ENCODE measurements at regions of chr1 and their contacts with region 1.

Region 1: GRCh38 chr1:92994105-92994712 is 32.9 kb upstream of the DIPK1A start:
- DNase-seq: peak in 1 of 3 donors; percentile 93
- ATAC-seq: peak; percentile 77
- H3K4me3 ChIP-seq: no peak overlapping the region
- H3K4me1 ChIP-seq: peaks cover 21% of the 10 kb centered on the region
- CTCF ChIP-seq: peak; percentile 65

Region 2: GRCh38 chr1:92858564-92859399 is 135.4 kb before region 1 on chr1:
- intact Hi-C with region 1: loop called (anchors 2 kb)
- DNase-seq: peak in 1 of 3 donors; percentile 87
- ATAC-seq: peak; percentile 89
- H3K4me3 ChIP-seq: no peak overlapping the region
- H3K4me1 ChIP-seq: peaks cover 3% of the 10 kb centered on the region
- CTCF ChIP-seq: peak; percentile 88

Region 3: DNA sequence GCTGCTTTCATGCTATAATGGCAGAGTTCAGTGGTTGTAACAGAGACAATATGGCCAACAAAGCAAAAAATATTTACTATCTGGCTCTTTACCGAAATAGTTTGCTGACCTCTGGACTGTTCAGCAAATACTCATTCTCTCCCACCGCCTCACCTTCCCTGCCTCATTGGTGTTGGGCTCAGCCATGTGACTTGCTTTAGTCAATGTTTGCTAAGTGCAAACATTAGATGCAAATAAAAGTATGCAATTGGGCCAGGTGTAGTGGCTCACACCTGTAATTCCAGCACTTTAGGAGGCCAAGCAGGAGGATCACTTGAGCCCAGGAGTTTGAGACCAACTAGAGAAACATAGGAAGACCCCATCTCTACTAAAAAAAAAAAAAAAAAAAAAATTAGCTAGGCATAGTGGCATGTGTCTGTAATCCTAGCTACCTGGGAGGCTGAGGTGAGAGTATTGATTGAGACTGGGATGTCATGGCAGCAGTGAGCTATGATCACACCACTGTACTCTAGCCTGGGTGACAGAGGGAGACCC is 107.3 kb before region 1 on chr1:
- intact Hi-C with region 1: no loop called
- DNase-seq: peak; percentile 32 to 51 (median 50)
- ATAC-seq: peak; percentile 99
- H3K4me3 ChIP-seq: no peak overlapping the region
- H3K4me1 ChIP-seq: peaks cover 4% of the 10 kb centered on the region
- CTCF ChIP-seq: no peak